Naive thymus-derived CD4-positive, alpha-beta T cell (primary cell): ENCODE measurements at regions of chr14 and their contacts with region 1.

Region 1: DNA sequence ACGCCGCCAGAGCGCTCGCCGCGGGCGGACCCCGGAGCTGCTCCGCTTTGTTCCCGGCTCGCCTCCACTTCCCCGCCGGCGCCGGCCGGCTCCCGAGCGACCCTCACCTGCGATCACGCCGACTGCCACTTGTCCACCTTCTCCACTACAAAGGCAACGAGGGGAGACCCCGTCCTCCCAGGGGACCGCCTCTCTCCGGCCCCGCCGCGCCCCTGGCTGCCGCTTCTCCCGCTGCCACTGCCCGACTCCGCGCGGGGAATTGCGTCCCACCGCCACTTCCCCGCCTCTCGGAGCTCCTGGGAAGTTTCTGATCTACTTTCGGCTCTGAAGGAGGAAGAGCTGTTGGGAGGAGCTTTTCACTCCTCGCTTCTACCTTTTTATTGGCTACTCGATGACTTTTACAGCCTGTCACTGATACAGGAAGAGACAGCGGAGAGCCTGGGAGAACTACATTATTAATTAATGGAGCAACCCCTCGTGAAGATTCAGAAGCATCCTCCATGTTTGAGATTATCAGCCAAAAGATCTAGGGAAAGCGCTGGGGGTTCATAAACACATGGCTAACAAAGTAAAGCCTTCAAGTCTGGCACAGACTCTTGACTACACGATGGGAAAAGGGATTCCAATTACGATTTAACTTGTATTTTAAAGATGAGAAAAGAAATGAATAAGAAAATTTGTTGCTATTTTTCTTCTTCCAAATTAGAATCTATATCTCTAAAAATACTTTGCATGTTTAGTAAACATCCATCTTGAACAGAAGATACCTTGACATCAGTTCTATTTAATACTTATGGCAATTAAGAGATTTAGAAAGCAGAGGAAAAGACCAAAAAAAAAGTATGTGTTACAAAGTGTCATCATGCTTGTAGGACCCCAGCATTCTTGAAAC is at the start of gene BAZ1A:
- DNase-seq: peak; percentile 26 to 61 (median 55)
- ATAC-seq: peak; percentile 14
- H3K4me3 ChIP-seq: peak within 1 kb of the TSS; percentile 85
- H3K4me3 Mint-ChIP-seq: peak within 1 kb of the TSS; percentile 91 to 100 (median 99)
- H3K27ac ChIP-seq: peak within 1 kb of the TSS; percentile 96
- H3K27ac Mint-ChIP-seq: peak within 1 kb of the TSS; percentile 94 to 100 (median 99)
- H3K4me1 ChIP-seq: peaks cover 10 to 19% of the 10 kb centered on the region in 2 donors
- H3K4me1 Mint-ChIP-seq: peaks cover 18 to 40% (median 34%) of the 10 kb centered on the region in 7 donors
- H3K27me3 ChIP-seq: no peaks in the 10 kb centered on the region
- H3K27me3 Mint-ChIP-seq: no peaks in the 10 kb centered on the region
- total RNA-seq, gene BAZ1A: 47.4 to 62.5 (median 53.3) TPM

Region 2: DNA sequence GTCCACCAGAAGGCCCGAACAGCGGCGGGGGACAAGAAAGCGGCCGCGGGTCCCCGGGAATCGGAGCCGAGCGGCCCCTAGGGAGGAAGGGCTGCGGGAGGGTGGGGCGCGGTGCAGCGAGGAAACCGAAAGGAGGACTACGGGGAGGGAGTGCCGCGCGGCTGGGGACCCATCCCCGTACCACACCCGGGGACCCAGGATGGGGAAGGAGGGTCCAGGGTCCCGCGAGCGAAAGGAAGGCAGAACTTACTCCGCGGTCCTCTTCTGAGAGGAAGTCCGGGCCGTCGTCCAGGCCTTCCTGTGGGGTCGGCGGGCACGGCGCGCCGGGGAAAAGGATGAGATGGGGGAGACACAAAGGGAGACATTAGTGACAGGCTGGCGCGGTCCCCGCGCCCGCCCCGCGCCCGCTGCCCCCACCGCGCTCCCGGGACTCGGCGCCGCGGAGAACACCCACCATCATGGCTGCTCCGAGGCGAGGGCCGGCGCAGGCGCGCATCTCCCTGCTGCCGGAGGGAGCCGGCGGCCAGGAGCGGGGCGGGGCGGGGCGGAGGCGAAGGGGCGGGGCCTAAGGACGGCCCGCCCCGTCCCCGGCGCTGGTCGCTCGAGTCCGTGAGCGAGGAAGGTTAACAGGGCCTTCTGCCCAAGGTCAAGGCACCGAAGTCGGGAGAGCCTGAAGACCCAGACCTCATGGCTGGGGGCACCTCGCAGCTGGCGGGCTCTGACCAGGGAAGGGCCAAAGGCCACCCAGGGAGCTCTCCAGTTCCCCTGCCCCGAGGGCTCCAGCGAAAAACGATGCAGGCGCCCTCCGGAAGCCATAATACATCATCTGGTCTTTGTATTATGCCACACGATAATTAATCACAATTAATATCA is 245.4 kb before region 1 on chr14 and contains the start of gene SNX6:
- CTCF ChIA-PET with region 1: no interaction called
- POLR2A ChIA-PET with region 1: no interaction called
- intact Hi-C with region 1: loop called in 1 of 2 experiments (anchors 1 kb)
- DNase-seq: peak; percentile 75 to 87 (median 83)
- ATAC-seq: peak; percentile 100
- H3K4me3 ChIP-seq: peak within 1 kb of the TSS; percentile 72
- H3K4me3 Mint-ChIP-seq: peak within 1 kb of the TSS; percentile 89 to 100 (median 98)
- H3K27ac ChIP-seq: peak within 1 kb of the TSS; percentile 98
- H3K27ac Mint-ChIP-seq: peak within 1 kb of the TSS; percentile 92 to 97 (median 96)
- H3K4me1 ChIP-seq: peaks cover 17 to 20% of the 10 kb centered on the region in 2 donors
- H3K4me1 Mint-ChIP-seq: peaks cover 6 to 49% (median 33%) of the 10 kb centered on the region in 7 donors
- H3K27me3 ChIP-seq: no peaks in the 10 kb centered on the region
- H3K27me3 Mint-ChIP-seq: peaks cover 0 to 18% (median 0%) of the 10 kb centered on the region in 5 donors
- total RNA-seq, gene SNX6: 56.6 to 78.9 (median 59.7) TPM

Region 3: DNA sequence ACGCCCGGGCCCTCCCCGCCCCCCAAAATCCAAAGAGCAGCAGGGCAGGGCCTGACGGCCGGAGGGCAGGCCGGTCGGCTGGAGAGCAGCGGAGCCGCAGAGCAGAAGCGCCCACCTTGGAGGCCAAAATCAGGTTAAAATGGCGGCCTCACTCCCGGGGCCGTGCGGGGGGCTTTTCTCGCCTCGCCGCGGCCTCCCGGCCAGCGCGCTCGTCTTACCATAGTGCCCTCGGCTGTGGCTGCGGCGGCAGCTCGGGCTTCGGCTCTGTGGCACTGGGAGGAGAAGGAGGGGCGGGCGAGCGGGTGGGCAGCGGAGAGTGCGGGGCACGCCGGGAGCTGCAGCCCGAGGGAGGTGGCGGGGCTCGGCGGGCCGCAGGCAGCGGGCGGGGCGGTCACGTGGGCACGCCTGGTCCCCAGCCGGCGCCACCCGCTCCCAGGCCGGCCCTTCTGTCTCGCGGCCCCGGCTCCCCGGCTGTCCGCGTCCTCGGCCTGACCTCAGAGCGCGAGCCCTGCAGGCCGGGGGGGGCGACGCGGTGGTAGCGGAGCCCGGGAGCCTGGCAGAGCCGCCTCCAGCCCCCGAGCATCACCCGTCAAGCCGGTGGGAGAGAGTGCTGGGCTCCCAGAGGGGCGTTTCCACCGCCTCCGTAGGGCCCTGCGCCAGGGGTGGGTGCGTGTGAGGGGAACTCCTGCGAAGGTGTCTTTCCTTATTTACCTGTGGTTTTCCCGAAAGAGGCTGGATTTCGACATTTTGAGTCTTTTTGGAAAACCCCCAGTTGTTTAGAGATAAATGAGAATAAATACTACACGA is 160.8 kb before region 1 on chr14 and contains the start of gene CFL2:
- CTCF ChIA-PET with region 1: no interaction called
- POLR2A ChIA-PET with region 1: interaction called, 3 read pairs
- intact Hi-C with region 1: loop called in 1 of 2 experiments (anchors 1 kb)
- DNase-seq: peak; percentile 41 to 85 (median 54)
- ATAC-seq: peak; percentile 86
- H3K4me3 ChIP-seq: peak within 1 kb of the TSS; percentile 62
- H3K4me3 Mint-ChIP-seq: peak within 1 kb of the TSS; percentile 89 to 97 (median 92)
- H3K27ac ChIP-seq: peak within 1 kb of the TSS; percentile 93
- H3K27ac Mint-ChIP-seq: peak within 1 kb of the TSS; percentile 85 to 95 (median 92)
- H3K4me1 ChIP-seq: peaks cover 4 to 6% of the 10 kb centered on the region in 2 donors
- H3K4me1 Mint-ChIP-seq: peaks cover 8 to 39% (median 27%) of the 10 kb centered on the region in 7 donors
- H3K27me3 ChIP-seq: no peaks in the 10 kb centered on the region
- H3K27me3 Mint-ChIP-seq: peaks cover 0 to 20% (median 0%) of the 10 kb centered on the region in 5 donors
- total RNA-seq, gene CFL2: 5.2 to 34.2 (median 11.7) TPM

Region 4: DNA sequence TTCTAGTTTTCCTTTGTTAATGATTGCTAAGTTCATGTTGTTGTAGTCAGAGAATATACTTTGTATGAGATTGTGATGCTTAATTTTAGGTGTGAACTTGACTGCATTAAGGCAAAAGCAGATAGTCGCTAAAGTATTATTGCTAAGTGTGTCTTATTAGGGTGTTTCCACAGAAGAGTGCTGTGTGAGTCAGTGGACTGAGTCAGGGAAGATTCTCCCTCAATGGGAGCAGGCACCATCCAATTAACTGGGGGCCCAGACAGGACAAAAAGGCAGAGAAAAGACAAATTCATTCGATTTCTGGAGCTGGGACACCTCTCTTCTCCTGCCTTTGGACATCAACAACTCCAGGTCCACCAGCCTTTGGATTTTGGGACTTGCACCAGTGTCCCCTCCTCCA is 48.6 kb before region 1 on chr14:
- CTCF ChIA-PET with region 1: no interaction called
- POLR2A ChIA-PET with region 1: no interaction called
- intact Hi-C with region 1: loop called in 1 of 2 experiments (anchors 2 kb)
- DNase-seq: no peak
- ATAC-seq: no peak
- H3K4me3 ChIP-seq: no peak overlapping the region
- H3K4me3 Mint-ChIP-seq: no peak overlapping the region
- H3K27ac ChIP-seq: no peak overlapping the region
- H3K27ac Mint-ChIP-seq: peak overlapping the region in 8 of 9 donors; percentile 14 to 65 (median 37)
- H3K4me1 ChIP-seq: peaks cover 0 to 6% of the 10 kb centered on the region in 2 donors
- H3K4me1 Mint-ChIP-seq: peaks cover 20 to 47% (median 31%) of the 10 kb centered on the region in 7 donors
- H3K27me3 ChIP-seq: no peaks in the 10 kb centered on the region
- H3K27me3 Mint-ChIP-seq: no peaks in the 10 kb centered on the region

Region 5: DNA sequence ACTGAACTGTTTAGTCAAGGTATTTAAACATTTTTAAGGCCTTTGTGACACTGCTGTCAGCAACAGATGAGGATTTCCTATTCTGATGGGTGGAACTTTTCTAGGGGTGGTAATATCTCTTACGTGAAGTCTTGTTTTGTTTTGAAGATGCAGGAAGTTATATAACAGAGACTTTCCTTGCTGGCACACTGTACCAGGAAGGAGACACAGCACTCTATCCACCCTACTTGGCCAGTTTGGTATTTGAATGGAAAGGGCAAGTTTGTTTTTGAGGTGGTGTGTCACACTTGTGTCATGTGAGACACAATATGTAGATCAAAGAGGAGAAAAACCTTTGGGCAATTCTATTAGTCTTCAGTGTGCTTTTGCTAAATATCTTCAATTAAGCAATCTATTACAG is 55.9 kb after region 1 on chr14:
- CTCF ChIA-PET with region 1: interaction called, 3 read pairs
- POLR2A ChIA-PET with region 1: interaction called, 13 read pairs
- intact Hi-C with region 1: loop called (anchors 1 kb)
- DNase-seq: peak in 7 of 9 donors; percentile 69 to 89 (median 83)
- ATAC-seq: peak; percentile 95
- H3K4me3 ChIP-seq: peak overlapping the region; percentile 22
- H3K4me3 Mint-ChIP-seq: peak overlapping the region; percentile 31 to 87 (median 76)
- H3K27ac ChIP-seq: peak overlapping the region; percentile 84
- H3K27ac Mint-ChIP-seq: peak overlapping the region; percentile 96 to 100 (median 98)
- H3K4me1 ChIP-seq: peaks cover 28 to 30% of the 10 kb centered on the region in 2 donors
- H3K4me1 Mint-ChIP-seq: peaks cover 15 to 44% (median 37%) of the 10 kb centered on the region in 7 donors
- H3K27me3 ChIP-seq: no peaks in the 10 kb centered on the region
- H3K27me3 Mint-ChIP-seq: no peaks in the 10 kb centered on the region

Region 6: GRCh38 chr14:35068238-35069012 is 193.1 kb after region 1 on chr14:
- CTCF ChIA-PET with region 1: no interaction called
- POLR2A ChIA-PET with region 1: no interaction called
- intact Hi-C with region 1: no loop called
- DNase-seq: no peak
- ATAC-seq: no peak
- H3K4me3 ChIP-seq: no peak overlapping the region
- H3K4me3 Mint-ChIP-seq: no peak overlapping the region
- H3K27ac ChIP-seq: no peak overlapping the region
- H3K27ac Mint-ChIP-seq: peak overlapping the region in 1 of 9 donors; percentile 41
- H3K4me1 ChIP-seq: no peaks in the 10 kb centered on the region
- H3K4me1 Mint-ChIP-seq: peaks cover 0 to 6% (median 0%) of the 10 kb centered on the region in 7 donors
- H3K27me3 ChIP-seq: no peaks in the 10 kb centered on the region
- H3K27me3 Mint-ChIP-seq: no peaks in the 10 kb centered on the region

Region 7: DNA sequence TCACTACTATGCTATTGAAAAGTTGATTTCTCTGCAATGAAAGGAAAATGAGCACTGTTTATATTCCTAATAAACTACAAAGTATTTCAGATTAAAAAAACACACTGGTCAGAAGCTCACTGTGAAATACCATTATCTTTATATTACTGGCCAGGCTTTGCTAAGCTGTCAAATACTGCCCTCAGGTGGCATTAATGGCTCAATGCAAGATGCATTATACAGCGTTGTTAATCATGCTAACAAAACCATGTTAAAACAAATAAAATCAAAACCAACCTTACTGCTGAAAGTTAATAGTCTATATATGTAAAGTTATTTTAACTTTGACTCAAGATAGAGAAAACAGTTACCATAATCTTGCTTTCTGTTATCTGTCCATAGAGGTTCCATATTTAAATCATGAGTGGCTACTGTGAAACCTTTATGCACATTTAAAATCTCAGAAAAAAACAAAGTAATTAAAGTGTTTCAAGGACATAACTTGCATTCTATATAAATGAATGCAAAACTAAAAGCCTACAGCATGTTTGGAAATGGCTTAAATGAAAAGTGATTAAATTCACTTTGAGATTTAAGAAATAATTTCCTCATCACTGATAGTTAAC is 812.2 kb after region 1 on chr14:
- CTCF ChIA-PET with region 1: no interaction called
- POLR2A ChIA-PET with region 1: no interaction called
- intact Hi-C with region 1: no loop called
- DNase-seq: peak in 5 of 9 donors; percentile 2 to 20 (median 10)
- ATAC-seq: peak; percentile 74
- H3K4me3 ChIP-seq: no peak overlapping the region
- H3K4me3 Mint-ChIP-seq: no peak overlapping the region
- H3K27ac ChIP-seq: no peak overlapping the region
- H3K27ac Mint-ChIP-seq: no peak overlapping the region
- H3K4me1 ChIP-seq: no peaks in the 10 kb centered on the region
- H3K4me1 Mint-ChIP-seq: peaks cover 0 to 15% (median 0%) of the 10 kb centered on the region in 7 donors
- H3K27me3 ChIP-seq: no peaks in the 10 kb centered on the region
- H3K27me3 Mint-ChIP-seq: no peaks in the 10 kb centered on the region

Region 8: GRCh38 chr14:35826218-35826951 is 951.1 kb after region 1 on chr14 and contains the start of gene BRMS1L:
- CTCF ChIA-PET with region 1: no interaction called
- POLR2A ChIA-PET with region 1: no interaction called
- intact Hi-C with region 1: loop called in 1 of 2 experiments (anchors 5 kb)
- DNase-seq: peak; percentile 88 to 97 (median 96)
- ATAC-seq: peak; percentile 99
- H3K4me3 ChIP-seq: peak within 1 kb of the TSS; percentile 95
- H3K4me3 Mint-ChIP-seq: peak within 1 kb of the TSS; percentile 84 to 96 (median 90)
- H3K27ac ChIP-seq: peak within 1 kb of the TSS; percentile 87
- H3K27ac Mint-ChIP-seq: peak within 1 kb of the TSS; percentile 53 to 94 (median 88)
- H3K4me1 ChIP-seq: peaks cover 6 to 8% of the 10 kb centered on the region in 2 donors
- H3K4me1 Mint-ChIP-seq: peaks cover 11 to 31% (median 25%) of the 10 kb centered on the region in 7 donors
- H3K27me3 ChIP-seq: no peaks in the 10 kb centered on the region
- H3K27me3 Mint-ChIP-seq: no peaks in the 10 kb centered on the region
- total RNA-seq, gene BRMS1L: 4.2 to 8.6 (median 5.8) TPM